ENCODE measurements at regions of chr11 and their contacts with region 1.

Region 1: DNA sequence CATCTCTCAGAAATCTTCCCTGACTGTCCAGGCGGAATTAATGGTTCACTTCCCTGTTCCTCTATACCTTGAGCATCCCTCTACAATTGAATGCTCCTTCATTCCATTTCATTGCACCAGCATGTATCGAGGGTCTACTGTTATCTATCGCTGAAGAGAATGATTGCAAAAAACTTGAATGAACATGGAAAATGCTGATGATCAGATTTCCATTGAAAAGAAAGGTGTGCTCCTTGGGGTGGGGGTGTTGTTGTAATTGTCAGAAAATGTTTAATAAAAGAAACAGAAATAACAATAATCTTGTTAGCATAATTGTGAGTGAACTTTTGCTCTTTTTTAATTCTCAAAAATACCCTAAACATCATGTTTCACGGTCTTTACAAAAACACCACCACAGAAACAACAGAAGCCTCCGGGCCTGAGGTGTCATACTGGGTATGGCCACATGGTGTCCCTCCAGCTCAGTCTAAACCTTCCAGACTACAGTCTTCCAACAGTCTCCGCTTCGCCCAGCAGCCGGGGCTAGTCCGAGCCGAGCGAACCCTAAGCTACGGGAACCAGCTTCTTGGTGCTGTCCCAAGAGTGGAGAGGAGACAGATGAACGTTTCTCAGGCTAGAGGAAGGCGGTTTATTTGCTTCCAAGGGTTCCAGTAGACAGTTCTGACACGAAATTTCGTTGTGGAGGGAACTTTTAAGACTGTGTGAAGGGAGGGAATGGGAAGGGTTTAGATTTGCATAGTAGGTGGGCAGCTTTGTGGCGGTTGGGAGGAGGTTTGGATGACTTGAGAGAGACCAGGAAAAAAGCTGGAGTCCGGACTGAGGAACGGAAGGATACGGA is 75.8 kb upstream of the ZBED5 start:
- DNase-seq: peak; percentile 70 to 80 (median 74)
- H3K4me3 ChIP-seq: peak overlapping the region; percentile 21 to 33
- H3K4me3 Mint-ChIP-seq: peak overlapping the region; percentile 85 to 94 (median 90)
- H3K27ac ChIP-seq: no peak overlapping the region
- H3K27ac Mint-ChIP-seq: peak overlapping the region in 5 of 7 donors; percentile 11 to 86 (median 57)
- H3K4me1 ChIP-seq: peaks cover 20% of the 10 kb centered on the region
- H3K4me1 Mint-ChIP-seq: peaks cover 5 to 21% (median 12%) of the 10 kb centered on the region in 4 donors
- H3K27me3 ChIP-seq: peaks cover 23% of the 10 kb centered on the region
- H3K27me3 Mint-ChIP-seq: peaks cover 11 to 26% of the 10 kb centered on the region in 2 donors

Region 2: DNA sequence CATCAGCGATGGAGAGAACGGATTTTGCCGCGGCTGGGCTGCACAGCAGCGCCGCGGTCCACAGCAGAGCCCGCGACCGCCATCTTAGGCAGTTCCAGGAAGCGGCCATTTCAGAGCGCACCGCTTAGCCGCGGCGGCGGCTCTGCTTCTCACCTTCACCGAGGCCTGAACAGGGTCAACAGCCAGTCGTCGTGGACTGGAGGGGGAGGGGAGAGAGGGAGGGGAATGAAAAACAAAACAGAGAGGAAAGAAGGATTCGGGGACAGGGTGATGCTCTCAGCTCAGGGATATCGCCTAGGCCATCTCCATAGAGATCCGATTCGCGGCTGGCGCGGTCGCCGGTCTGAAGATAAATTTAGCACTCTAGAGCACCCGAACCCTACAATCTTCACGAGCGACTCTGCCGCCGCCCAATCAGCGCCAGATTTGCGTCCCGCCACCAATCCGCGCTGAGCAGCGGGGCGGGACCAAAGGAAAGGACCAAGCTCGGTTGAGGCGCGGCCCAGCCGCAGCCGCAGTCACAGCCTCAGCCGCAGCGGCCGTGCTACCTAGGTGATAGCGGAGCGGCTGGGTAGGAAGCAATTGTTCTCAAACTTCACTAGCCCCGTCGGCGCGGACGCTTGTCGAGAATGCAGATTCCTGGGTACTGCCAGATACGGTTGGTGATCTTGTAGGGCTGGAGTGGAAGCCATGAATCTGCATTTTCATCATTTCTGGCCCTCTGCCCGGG is 75.8 kb before region 1 on chr11 and contains the start of gene ZBED5:
- CTCF ChIA-PET with region 1: interaction called, 3 read pairs
- POLR2A ChIA-PET with region 1: interaction called, 11 read pairs
- intact Hi-C with region 1: loop called (anchors 5 kb)
- DNase-seq: peak; percentile 95 to 97 (median 97)
- H3K4me3 ChIP-seq: peak within 1 kb of the TSS; percentile 93 to 100
- H3K4me3 Mint-ChIP-seq: peak within 1 kb of the TSS; percentile 98 to 100 (median 99)
- H3K27ac ChIP-seq: peak within 1 kb of the TSS; percentile 93
- H3K27ac Mint-ChIP-seq: peak within 1 kb of the TSS; percentile 99 to 100 (median 99)
- H3K4me1 ChIP-seq: peaks cover 36% of the 10 kb centered on the region
- H3K4me1 Mint-ChIP-seq: peaks cover 26 to 63% (median 34%) of the 10 kb centered on the region in 4 donors
- H3K27me3 ChIP-seq: no peaks in the 10 kb centered on the region
- H3K27me3 Mint-ChIP-seq: no peaks in the 10 kb centered on the region
- total RNA-seq, gene ZBED5: 126 to 129 TPM

Region 3: DNA sequence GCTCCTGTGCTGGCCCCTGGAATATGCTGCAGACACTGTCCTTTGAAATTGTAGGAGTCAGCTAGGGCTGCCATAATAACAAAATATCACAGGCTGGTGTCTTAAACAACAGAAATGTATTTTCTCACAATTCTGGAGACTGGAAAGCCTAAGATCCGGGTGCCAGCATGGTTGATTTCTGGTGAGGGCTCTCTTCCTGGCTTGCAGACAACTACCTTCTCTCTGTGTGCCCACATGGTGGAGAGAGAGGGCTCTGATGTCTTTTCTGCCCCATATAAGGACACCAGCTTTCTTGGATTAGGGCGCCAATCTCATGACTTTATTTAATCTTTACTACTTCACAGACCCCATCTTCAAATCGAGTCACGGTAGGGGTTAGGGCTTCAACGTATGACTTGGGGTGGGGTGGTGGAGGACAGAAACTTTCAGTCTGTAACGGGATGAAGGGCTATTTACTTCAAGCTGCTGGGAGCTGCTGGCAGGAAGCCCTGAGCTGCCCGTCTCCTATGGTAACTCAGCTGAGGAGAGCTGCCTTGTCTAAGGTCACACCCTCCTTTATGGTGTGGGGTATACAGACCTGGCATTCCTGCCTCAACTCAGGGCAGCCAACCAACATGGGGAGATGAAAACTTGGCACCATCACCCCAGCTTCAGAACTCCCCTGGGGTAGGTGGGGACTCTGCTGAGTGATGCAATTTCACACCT is 67.1 kb after region 1 on chr11:
- CTCF ChIA-PET with region 1: interaction called, 10 read pairs
- POLR2A ChIA-PET with region 1: no interaction called
- intact Hi-C with region 1: no loop called
- DNase-seq: no peak
- H3K4me3 ChIP-seq: no peak overlapping the region
- H3K4me3 Mint-ChIP-seq: no peak overlapping the region
- H3K27ac ChIP-seq: no peak overlapping the region
- H3K27ac Mint-ChIP-seq: no peak overlapping the region
- H3K4me1 ChIP-seq: no peaks in the 10 kb centered on the region
- H3K4me1 Mint-ChIP-seq: no peaks in the 10 kb centered on the region
- H3K27me3 ChIP-seq: peaks cover 9% of the 10 kb centered on the region
- H3K27me3 Mint-ChIP-seq: peaks cover 21 to 33% of the 10 kb centered on the region in 2 donors

Region 4: GRCh38 chr11:11036848-11037732 is 103.4 kb after region 1 on chr11:
- CTCF ChIA-PET with region 1: interaction called, 15 read pairs
- POLR2A ChIA-PET with region 1: no interaction called
- intact Hi-C with region 1: no loop called
- DNase-seq: peak; percentile 50 to 59 (median 57)
- H3K4me3 ChIP-seq: no peak overlapping the region
- H3K4me3 Mint-ChIP-seq: no peak overlapping the region
- H3K27ac ChIP-seq: no peak overlapping the region
- H3K27ac Mint-ChIP-seq: peak overlapping the region in 3 of 7 donors; percentile 29 to 77 (median 56)
- H3K4me1 ChIP-seq: no peaks in the 10 kb centered on the region
- H3K4me1 Mint-ChIP-seq: peaks cover 5 to 8% (median 6%) of the 10 kb centered on the region in 4 donors
- H3K27me3 ChIP-seq: peaks cover 4% of the 10 kb centered on the region
- H3K27me3 Mint-ChIP-seq: no peaks in the 10 kb centered on the region

Region 5: DNA sequence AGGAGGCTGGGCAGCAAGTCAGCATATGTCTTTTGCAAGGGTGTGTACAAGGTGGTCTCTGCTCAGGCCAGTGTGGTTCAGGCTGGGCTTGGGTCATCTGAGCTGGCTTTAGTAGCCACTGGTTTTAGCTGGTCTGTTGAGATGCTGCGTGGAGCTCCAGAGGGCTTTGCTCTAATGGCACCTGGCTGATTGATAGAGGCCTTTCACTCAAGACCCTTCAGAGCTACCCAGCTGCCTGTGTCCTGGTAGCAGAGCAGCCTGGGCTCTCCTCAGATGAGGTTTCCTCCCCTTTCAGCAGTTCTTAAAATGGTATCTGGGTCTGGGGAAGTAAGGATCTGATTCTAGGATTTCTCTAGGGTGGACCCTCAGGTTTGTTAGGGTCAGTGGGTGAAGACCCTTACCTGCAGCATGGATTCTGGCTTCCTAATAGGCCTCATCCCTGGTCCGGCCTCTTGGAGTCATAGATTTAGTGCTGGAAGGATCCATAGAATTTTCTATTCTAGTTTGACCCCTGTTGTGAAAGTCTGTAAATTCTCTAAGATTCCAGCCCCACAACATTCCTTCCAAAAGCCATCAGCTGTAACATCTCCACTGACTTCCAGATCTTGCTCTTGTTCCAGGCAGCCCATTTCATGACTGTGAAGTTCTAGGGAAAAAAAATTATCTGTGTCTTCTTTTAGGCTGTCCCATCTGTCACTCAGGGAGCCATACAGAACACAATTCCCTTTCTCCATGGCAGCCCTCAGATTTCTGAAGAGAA is 114.4 kb after region 1 on chr11:
- CTCF ChIA-PET with region 1: no interaction called
- POLR2A ChIA-PET with region 1: no interaction called
- intact Hi-C with region 1: no loop called
- DNase-seq: no peak
- H3K4me3 ChIP-seq: no peak overlapping the region
- H3K4me3 Mint-ChIP-seq: no peak overlapping the region
- H3K27ac ChIP-seq: no peak overlapping the region
- H3K27ac Mint-ChIP-seq: no peak overlapping the region
- H3K4me1 ChIP-seq: no peaks in the 10 kb centered on the region
- H3K4me1 Mint-ChIP-seq: no peaks in the 10 kb centered on the region
- H3K27me3 ChIP-seq: no peaks in the 10 kb centered on the region
- H3K27me3 Mint-ChIP-seq: no peaks in the 10 kb centered on the region

Region 6: GRCh38 chr11:11265994-11266606 is 332.4 kb after region 1 on chr11:
- CTCF ChIA-PET with region 1: no interaction called
- POLR2A ChIA-PET with region 1: no interaction called
- intact Hi-C with region 1: loop called (anchors 10 kb)
- DNase-seq: peak in 4 of 5 donors; percentile 30 to 51 (median 46)
- H3K4me3 ChIP-seq: no peak overlapping the region
- H3K4me3 Mint-ChIP-seq: no peak overlapping the region
- H3K27ac ChIP-seq: no peak overlapping the region
- H3K27ac Mint-ChIP-seq: no peak overlapping the region
- H3K4me1 ChIP-seq: no peaks in the 10 kb centered on the region
- H3K4me1 Mint-ChIP-seq: peaks cover 0 to 3% (median 0%) of the 10 kb centered on the region in 4 donors
- H3K27me3 ChIP-seq: no peaks in the 10 kb centered on the region
- H3K27me3 Mint-ChIP-seq: peaks cover 0 to 3% of the 10 kb centered on the region in 2 donors

Region 7: GRCh38 chr11:12043959-12044819 is 1110.5 kb after region 1 on chr11:
- CTCF ChIA-PET with region 1: no interaction called
- POLR2A ChIA-PET with region 1: no interaction called
- intact Hi-C with region 1: loop called (anchors 10 kb)
- DNase-seq: peak in 4 of 5 donors; percentile 49 to 60 (median 50)
- H3K4me3 ChIP-seq: no peak overlapping the region
- H3K4me3 Mint-ChIP-seq: no peak overlapping the region
- H3K27ac ChIP-seq: no peak overlapping the region
- H3K27ac Mint-ChIP-seq: no peak overlapping the region
- H3K4me1 ChIP-seq: no peaks in the 10 kb centered on the region
- H3K4me1 Mint-ChIP-seq: peaks cover 2 to 5% (median 3%) of the 10 kb centered on the region in 4 donors
- H3K27me3 ChIP-seq: no peaks in the 10 kb centered on the region
- H3K27me3 Mint-ChIP-seq: no peaks in the 10 kb centered on the region